ENCODE measurements at regions of chr2 and their contacts with region 1.

Region 1: GRCh38 chr2:127701193-127701650 is at the start of gene SFT2D3:
- DNase-seq: peak; percentile 89
- ATAC-seq: peak; percentile 92
- H3K4me3 ChIP-seq: peak within 1 kb of the TSS; percentile 85
- H3K27ac ChIP-seq: peak within 1 kb of the TSS; percentile 91
- H3K4me1 ChIP-seq: peaks cover 8% of the 10 kb centered on the region
- H3K27me3 ChIP-seq: no peaks in the 10 kb centered on the region
- CTCF ChIP-seq: no peak
- POLR2A ChIP-seq: peak; percentile 93
- RAD21 ChIP-seq: no peak
- total RNA-seq, gene SFT2D3: 2.5 and 3.9 TPM in 2 replicates

Region 2: GRCh38 chr2:127526149-127527000 is 174.8 kb before region 1 on chr2 and contains the start of gene IWS1:
- CTCF ChIA-PET with region 1: no interaction called
- POLR2A ChIA-PET with region 1: no interaction called
- dilution Hi-C with region 1: no loop called
- in situ Hi-C with region 1: no loop called
- intact Hi-C with region 1: loop called (anchors 10 kb)
- DNase-seq: peak; percentile 97
- ATAC-seq: peak; percentile 96
- H3K4me3 ChIP-seq: peak within 1 kb of the TSS; percentile 73
- H3K27ac ChIP-seq: peak within 1 kb of the TSS; percentile 92
- H3K4me1 ChIP-seq: no peaks in the 10 kb centered on the region
- H3K27me3 ChIP-seq: no peaks in the 10 kb centered on the region
- CTCF ChIP-seq: peak; percentile 27; the same call in 1 of the 2 replicates
- POLR2A ChIP-seq: peak; percentile 79
- RAD21 ChIP-seq: 0 out of 2 replicates have a peak, but pooled peaks have one; percentile 3
- total RNA-seq, gene IWS1: 50.0 and 52.5 TPM in 2 replicates

Region 3: GRCh38 chr2:127859712-127860085 is 158.5 kb after region 1 on chr2:
- CTCF ChIA-PET with region 1: no interaction called
- POLR2A ChIA-PET with region 1: interaction called, 6 read pairs
- dilution Hi-C with region 1: no loop called
- in situ Hi-C with region 1: no loop called
- intact Hi-C with region 1: loop called (anchors 1 kb)
- DNase-seq: no peak
- ATAC-seq: no peak
- H3K4me3 ChIP-seq: no peak overlapping the region
- H3K27ac ChIP-seq: no peak overlapping the region
- H3K4me1 ChIP-seq: peaks cover 2% of the 10 kb centered on the region; the same call in 1 of the 2 replicates
- H3K27me3 ChIP-seq: no peaks in the 10 kb centered on the region
- CTCF ChIP-seq: no peak
- POLR2A ChIP-seq: no peak
- RAD21 ChIP-seq: no peak